ENCODE measurements at regions of chr1 and their contacts with region 1.

Region 1: DNA sequence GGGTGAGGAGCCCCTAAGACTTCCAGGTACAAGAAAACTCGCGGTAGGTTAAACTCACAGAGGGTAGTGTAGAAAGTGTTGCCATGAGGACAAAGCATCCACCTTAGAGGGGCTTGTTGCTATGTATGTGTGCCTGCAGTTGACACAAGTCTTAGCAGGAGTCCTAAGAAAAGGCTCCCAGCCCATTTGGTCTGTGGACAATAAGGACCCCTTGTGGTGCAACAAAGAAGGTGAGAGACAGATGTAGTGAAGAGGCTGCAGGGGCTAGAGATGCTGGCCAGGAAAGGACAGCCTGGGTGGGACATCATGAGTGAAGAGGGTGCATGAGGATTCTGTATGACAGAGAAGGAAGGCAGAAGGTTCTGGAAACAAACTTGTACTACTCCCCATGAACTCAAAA is 36.3 kb upstream of the IL10 start:
- DNase-seq: peak; percentile 73
- ATAC-seq: peak; percentile 86
- H3K4me3 Mint-ChIP-seq: no peak overlapping the region
- H3K27ac Mint-ChIP-seq: peak overlapping the region; percentile 7
- H3K4me1 Mint-ChIP-seq: peaks cover 49% of the 10 kb centered on the region
- H3K27me3 Mint-ChIP-seq: no peaks in the 10 kb centered on the region

Region 2: DNA sequence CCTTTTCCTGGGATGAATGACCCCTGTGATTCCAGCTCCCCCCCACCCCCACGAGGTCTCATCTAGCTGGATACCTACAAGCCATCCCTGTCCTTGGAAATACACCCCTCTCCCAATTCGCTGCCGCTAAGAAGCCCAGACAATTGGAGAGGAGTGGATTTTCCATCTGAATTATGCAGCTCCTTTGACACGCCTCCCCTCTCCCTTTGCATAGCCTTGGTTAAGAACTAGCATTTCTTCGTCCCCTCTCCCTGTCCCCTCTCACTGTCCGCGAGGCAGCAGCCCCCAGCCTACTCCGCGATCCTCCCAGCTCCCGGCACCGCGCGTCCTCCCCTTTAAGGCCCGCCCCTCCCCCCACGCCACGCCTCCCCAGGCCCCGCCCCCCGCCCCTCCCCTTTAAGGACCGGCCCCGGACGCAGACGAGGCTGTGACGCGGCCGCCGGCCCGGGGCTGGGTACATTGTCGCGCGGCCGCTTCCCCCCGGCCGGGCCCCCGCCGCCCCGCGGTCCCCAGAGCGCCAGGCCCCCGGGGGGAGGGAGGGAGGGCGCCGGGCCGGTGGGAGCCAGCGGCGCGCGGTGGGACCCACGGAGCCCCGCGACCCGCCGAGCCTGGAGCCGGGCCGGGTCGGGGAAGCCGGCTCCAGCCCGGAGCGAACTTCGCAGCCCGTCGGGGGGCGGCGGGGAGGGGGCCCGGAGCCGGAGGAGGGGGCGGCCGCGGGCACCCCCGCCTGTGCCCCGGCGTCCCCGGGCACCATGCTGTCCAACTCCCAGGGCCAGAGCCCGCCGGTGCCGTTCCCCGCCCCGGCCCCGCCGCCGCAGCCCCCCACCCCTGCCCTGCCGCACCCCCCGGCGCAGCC is 123.9 kb before region 1 on chr1 and contains the start of gene MAPKAPK2:
- CTCF ChIA-PET with region 1: interaction called, 13 read pairs
- POLR2A ChIA-PET with region 1: interaction called, 4 read pairs
- DNase-seq: peak; percentile 81
- ATAC-seq: peak; percentile 70
- H3K4me3 Mint-ChIP-seq: peak within 1 kb of the TSS; percentile 99
- H3K27ac Mint-ChIP-seq: peak within 1 kb of the TSS; percentile 95
- H3K4me1 Mint-ChIP-seq: peaks cover 41% of the 10 kb centered on the region
- H3K27me3 Mint-ChIP-seq: peaks cover 20% of the 10 kb centered on the region
- total RNA-seq, gene MAPKAPK2: 59.0 to 61.3 TPM

Region 3: GRCh38 chr1:206784471-206784903 is 24.1 kb before region 1 on chr1:
- CTCF ChIA-PET with region 1: interaction called, 26 read pairs
- POLR2A ChIA-PET with region 1: interaction called, 4 read pairs
- DNase-seq: peak; percentile 94
- ATAC-seq: peak; percentile 84
- H3K4me3 Mint-ChIP-seq: peak overlapping the region; percentile 35
- H3K27ac Mint-ChIP-seq: peak overlapping the region; percentile 86
- H3K4me1 Mint-ChIP-seq: peaks cover 66% of the 10 kb centered on the region
- H3K27me3 Mint-ChIP-seq: peaks cover 15% of the 10 kb centered on the region

Region 4: DNA sequence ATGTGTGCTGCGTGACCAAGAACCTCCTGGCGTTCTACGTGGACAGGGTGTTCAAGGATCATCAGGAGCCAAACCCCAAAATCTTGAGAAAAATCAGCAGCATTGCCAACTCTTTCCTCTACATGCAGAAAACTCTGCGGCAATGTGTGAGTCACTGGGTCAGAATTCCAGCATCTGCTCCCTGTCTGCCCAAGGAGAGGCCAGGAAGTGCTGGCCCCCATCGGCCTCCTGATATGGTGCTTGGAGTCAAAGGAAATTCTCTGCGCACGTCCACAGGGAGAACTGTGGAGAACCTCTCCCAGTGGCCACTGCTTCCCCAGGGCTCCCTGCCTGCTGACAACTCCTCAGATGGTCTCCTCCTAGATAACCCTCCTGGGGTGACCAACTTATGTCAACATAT is 31.2 kb after region 1 on chr1:
- CTCF ChIA-PET with region 1: interaction called, 118 read pairs
- POLR2A ChIA-PET with region 1: no interaction called
- DNase-seq: no peak
- ATAC-seq: no peak
- H3K4me3 Mint-ChIP-seq: no peak overlapping the region
- H3K27ac Mint-ChIP-seq: no peak overlapping the region
- H3K4me1 Mint-ChIP-seq: peaks cover 5% of the 10 kb centered on the region
- H3K27me3 Mint-ChIP-seq: peaks cover 25% of the 10 kb centered on the region

Region 5: DNA sequence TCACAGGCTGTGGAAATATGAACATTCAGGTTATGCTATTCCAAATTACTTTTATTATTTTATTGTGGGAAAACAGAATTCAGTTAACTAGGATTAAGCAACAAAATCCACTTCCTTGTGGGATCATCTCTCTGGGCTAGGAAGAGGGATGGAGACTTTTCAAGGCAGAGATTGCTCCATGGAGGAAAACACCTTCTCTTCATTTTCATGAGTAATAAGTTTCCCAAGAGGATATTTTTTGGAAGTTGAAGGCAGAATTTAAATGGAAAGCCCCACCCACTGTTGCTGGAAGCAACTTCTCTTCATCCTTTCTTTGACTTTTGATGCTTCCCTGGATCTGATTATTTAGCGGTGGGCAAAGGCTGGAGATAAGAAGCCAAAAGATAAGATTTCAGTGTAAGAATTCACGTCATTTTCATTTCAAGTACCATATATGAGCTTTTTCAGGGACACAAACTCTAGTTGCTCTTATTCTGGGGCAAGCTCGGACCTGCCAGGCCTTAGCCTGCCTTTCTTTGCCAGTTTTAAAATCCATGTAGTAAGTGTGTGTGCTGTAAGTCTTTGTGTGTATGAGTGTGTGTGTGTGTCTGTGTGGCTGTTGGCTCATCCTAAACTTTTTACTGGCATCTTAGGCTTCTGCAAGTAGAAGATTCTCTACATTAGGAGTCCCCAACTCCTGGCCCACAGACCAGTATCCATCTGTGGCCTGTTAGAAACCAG is 76.9 kb after region 1 on chr1:
- CTCF ChIA-PET with region 1: interaction called, 10 read pairs
- POLR2A ChIA-PET with region 1: no interaction called
- DNase-seq: no peak
- ATAC-seq: no peak
- H3K4me3 Mint-ChIP-seq: no peak overlapping the region
- H3K27ac Mint-ChIP-seq: no peak overlapping the region
- H3K4me1 Mint-ChIP-seq: peaks cover 15% of the 10 kb centered on the region
- H3K27me3 Mint-ChIP-seq: peaks cover 15% of the 10 kb centered on the region

Region 6: GRCh38 chr1:206918076-206918475 is 109.5 kb after region 1 on chr1:
- CTCF ChIA-PET with region 1: interaction called, 185 read pairs
- POLR2A ChIA-PET with region 1: interaction called, 3 read pairs
- DNase-seq: no peak
- ATAC-seq: no peak
- H3K4me3 Mint-ChIP-seq: peak overlapping the region; percentile 58
- H3K27ac Mint-ChIP-seq: peak overlapping the region; percentile 75
- H3K4me1 Mint-ChIP-seq: peaks cover 66% of the 10 kb centered on the region
- H3K27me3 Mint-ChIP-seq: no peaks in the 10 kb centered on the region

Region 7: DNA sequence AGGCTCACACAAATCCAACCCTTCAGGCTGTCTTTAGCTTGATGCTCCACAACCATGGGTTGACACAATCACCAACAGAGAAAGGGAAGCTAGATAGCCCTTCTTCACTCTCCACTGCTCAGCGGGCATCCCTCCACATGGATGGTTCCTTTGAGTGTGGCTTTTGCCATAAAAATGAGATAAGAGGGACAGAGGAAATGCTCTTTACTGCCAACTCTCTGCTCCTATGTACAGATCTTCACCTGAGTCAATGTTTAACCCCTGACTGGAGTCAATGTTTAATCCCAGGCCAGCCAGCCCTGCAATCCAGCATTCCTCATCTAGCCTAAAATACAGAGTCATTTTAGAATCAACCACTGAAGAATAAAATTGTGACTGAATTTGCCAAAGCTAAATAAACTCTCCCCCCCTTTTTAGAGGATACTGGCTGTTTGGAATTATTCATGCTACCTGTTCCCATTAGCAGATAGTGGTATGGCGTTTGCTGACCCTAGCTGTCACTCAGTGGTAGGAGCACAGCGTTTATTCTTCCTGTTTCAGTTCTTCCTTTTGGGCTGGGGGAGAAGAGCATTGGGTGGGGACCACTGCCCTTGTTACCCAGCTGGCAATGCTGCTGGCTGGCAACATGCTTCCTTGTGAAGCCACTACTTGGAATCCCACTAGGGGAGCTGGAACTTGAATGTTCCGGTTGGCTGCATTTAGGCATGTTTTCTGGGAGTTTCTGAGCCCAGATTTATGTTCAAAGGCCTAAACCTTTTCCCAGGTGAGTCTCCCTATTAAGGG is 142.9 kb after region 1 on chr1:
- CTCF ChIA-PET with region 1: no interaction called
- POLR2A ChIA-PET with region 1: no interaction called
- DNase-seq: no peak
- ATAC-seq: no peak
- H3K4me3 Mint-ChIP-seq: no peak overlapping the region
- H3K27ac Mint-ChIP-seq: no peak overlapping the region
- H3K4me1 Mint-ChIP-seq: peaks cover 13% of the 10 kb centered on the region
- H3K27me3 Mint-ChIP-seq: peaks cover 12% of the 10 kb centered on the region

Region 8: DNA sequence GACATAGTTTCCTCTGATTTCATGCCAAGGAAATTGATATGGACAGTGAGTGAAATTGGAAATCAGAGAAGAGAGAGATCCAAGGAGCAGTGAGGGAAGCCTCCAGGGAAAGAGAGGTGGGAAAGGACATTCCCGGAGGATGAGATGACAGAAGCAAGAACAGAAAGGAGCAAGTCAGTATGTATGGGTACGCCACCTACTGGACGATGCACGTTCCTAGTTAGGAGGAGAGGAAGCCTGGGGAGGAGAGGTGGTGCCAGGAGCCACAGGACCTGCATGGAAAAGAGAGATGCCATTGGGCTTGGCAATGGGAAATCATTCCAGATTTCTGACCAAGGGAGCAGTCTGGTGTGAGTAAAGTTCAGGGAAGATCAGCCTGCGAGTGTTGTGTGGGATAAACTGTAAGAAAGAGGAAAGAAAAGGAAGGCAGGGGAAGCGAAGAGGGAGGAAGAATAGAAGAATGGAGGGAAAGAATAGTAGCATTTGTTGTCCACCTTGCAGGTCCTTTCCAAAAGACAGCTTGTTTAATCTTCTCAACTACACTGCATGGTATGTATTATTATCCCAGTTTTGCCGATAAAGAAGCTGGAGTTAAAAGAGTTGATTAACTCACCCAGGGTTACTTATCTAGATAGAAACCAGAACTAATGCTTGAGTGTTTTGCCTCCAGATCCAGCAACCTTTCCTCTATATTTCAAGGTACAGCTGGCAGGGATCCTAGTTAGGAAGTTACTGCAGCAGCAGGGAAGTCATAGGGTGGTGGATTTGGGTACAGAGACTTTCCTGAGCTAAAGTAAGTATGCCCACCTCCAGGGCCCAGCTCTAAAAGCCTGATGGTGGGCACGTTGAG is 196.6 kb after region 1 on chr1:
- CTCF ChIA-PET with region 1: no interaction called
- POLR2A ChIA-PET with region 1: no interaction called
- DNase-seq: peak; percentile 60
- ATAC-seq: peak; percentile 74
- H3K4me3 Mint-ChIP-seq: no peak overlapping the region
- H3K27ac Mint-ChIP-seq: no peak overlapping the region
- H3K4me1 Mint-ChIP-seq: no peaks in the 10 kb centered on the region
- H3K27me3 Mint-ChIP-seq: peaks cover 33% of the 10 kb centered on the region